Common myeloid progenitor, CD34-positive (primary cell): ENCODE measurements at regions of chr3 and their contacts with region 1.

Region 1: GRCh38 chr3:158713094-158713499 is 19.2 kb downstream of the RARRES1 start:
- DNase-seq: peak; percentile 73 to 93 (median 87)
- H3K4me3 ChIP-seq: no peak overlapping the region
- H3K27ac ChIP-seq: peak overlapping the region; percentile 1 to 25
- H3K4me1 ChIP-seq: peaks cover 9 to 49% (median 13%) of the 10 kb centered on the region in 4 experiments
- H3K27me3 ChIP-seq: no peaks in the 10 kb centered on the region

Region 2: GRCh38 chr3:158308236-158308928 is 404.7 kb before region 1 on chr3:
- CTCF ChIA-PET with region 1: no interaction called
- POLR2A ChIA-PET with region 1: no interaction called
- DNase-seq: no peak
- H3K4me3 ChIP-seq: no peak overlapping the region
- H3K27ac ChIP-seq: no peak overlapping the region
- H3K4me1 ChIP-seq: no peaks in the 10 kb centered on the region
- H3K27me3 ChIP-seq: no peaks in the 10 kb centered on the region

Region 3: GRCh38 chr3:158702815-158703481 is 10.1 kb before region 1 on chr3:
- CTCF ChIA-PET with region 1: interaction called, 12 read pairs
- POLR2A ChIA-PET with region 1: no interaction called
- DNase-seq: no peak
- H3K4me3 ChIP-seq: no peak overlapping the region
- H3K27ac ChIP-seq: no peak overlapping the region
- H3K4me1 ChIP-seq: peaks cover 0 to 27% (median 1%) of the 10 kb centered on the region in 4 experiments
- H3K27me3 ChIP-seq: no peaks in the 10 kb centered on the region